Naive thymus-derived CD4-positive, alpha-beta T cell (primary cell): ENCODE measurements at regions of chr17 and their contacts with region 1.

Region 1: DNA sequence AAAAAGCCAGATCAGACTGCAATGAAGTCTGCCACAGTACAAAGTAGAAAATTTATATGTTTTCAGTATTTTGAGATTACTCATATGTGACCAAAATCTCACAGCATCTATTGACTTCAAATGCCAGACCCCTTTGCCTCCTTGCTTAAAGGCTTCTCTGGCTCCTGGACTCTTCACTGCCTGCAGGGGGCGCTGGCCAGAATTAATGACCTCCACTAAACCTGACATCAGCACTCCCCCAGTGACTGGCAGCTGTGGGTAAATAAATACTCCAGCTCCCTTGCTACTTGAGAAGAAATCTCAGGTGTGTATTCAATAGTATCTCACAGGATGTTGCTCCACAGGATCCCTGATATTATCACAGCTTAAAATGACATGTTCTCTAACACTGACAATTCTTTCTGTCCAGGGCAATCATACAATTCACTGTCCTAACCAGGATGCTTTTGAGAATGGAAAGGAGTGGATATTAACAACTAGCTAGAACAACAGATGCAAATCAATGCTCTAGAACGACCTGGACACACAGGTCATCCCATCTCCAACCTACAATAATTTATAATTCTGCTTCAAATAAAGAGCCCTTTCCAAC is 4.0 kb downstream of the BECN1 start:
- DNase-seq: peak; percentile 16 to 57 (median 34)
- ATAC-seq: no peak
- H3K4me3 ChIP-seq: no peak overlapping the region
- H3K4me3 Mint-ChIP-seq: peak overlapping the region in 2 of 10 donors; percentile 1 to 22
- H3K27ac ChIP-seq: peak overlapping the region; percentile 40
- H3K27ac Mint-ChIP-seq: peak overlapping the region in 4 of 9 donors; percentile 6 to 43 (median 27)
- H3K4me1 ChIP-seq: peaks cover 6 to 12% of the 10 kb centered on the region in 2 donors
- H3K4me1 Mint-ChIP-seq: peaks cover 19 to 42% (median 28%) of the 10 kb centered on the region in 7 donors
- H3K27me3 ChIP-seq: no peaks in the 10 kb centered on the region
- H3K27me3 Mint-ChIP-seq: no peaks in the 10 kb centered on the region

Region 2: DNA sequence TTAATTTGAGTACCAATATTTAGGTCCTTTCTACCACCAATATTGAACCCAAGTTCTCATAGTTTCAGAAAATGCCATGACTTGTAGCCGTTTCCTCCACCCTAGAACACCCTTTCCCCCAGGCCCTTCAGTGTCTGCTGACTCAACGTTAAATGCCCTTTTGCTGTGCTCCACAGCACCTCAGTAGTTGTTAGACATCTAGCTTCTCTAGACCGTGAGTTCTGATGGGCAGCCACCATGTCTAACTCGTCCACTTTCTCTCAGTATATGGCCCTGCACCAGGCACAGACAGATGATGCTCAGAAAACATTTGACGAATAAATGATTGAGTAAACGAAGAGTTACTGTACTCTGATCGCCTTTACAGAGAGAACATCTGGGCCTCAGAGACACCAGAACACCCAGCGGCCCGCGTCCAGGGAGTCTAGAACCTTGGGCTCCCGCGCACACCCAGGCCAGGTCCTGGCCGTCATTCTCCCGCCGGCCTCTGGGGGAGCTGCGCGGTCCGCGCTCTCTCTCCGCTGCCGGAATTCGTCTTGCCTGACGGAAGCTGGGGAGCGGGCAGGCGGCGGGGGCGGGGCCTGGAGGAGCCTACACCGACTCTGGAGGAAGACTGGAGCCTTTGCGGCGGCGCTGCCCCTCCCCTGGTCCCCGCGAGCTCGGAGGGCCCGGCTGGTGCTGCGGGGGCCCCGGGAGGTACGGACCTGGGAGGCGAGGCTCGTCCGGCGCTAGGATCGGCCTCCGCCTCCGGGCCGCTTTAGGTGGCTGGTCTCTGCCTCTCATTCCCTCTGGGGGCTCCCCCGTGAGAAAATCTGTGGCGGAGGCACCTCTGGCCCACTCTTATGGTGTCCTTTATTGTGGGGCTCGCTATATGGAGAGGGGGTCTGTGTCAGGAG is 800.3 kb before region 1 on chr17 and contains the start of gene NKIRAS2:
- CTCF ChIA-PET with region 1: no interaction called
- POLR2A ChIA-PET with region 1: no interaction called
- intact Hi-C with region 1: loop called in 1 of 2 experiments (anchors 5 kb)
- DNase-seq: peak; percentile 83 to 97 (median 89)
- ATAC-seq: peak; percentile 88
- H3K4me3 ChIP-seq: peak within 1 kb of the TSS; percentile 85
- H3K4me3 Mint-ChIP-seq: peak within 1 kb of the TSS; percentile 91 to 100 (median 99)
- H3K27ac ChIP-seq: peak within 1 kb of the TSS; percentile 84
- H3K27ac Mint-ChIP-seq: peak within 1 kb of the TSS; percentile 77 to 99 (median 90)
- H3K4me1 ChIP-seq: peaks cover 32 to 37% of the 10 kb centered on the region in 2 donors
- H3K4me1 Mint-ChIP-seq: peaks cover 44 to 69% (median 56%) of the 10 kb centered on the region in 7 donors
- H3K27me3 ChIP-seq: no peaks in the 10 kb centered on the region
- H3K27me3 Mint-ChIP-seq: no peaks in the 10 kb centered on the region
- total RNA-seq, gene NKIRAS2: 14.3 to 24.0 (median 20.4) TPM

Region 3: DNA sequence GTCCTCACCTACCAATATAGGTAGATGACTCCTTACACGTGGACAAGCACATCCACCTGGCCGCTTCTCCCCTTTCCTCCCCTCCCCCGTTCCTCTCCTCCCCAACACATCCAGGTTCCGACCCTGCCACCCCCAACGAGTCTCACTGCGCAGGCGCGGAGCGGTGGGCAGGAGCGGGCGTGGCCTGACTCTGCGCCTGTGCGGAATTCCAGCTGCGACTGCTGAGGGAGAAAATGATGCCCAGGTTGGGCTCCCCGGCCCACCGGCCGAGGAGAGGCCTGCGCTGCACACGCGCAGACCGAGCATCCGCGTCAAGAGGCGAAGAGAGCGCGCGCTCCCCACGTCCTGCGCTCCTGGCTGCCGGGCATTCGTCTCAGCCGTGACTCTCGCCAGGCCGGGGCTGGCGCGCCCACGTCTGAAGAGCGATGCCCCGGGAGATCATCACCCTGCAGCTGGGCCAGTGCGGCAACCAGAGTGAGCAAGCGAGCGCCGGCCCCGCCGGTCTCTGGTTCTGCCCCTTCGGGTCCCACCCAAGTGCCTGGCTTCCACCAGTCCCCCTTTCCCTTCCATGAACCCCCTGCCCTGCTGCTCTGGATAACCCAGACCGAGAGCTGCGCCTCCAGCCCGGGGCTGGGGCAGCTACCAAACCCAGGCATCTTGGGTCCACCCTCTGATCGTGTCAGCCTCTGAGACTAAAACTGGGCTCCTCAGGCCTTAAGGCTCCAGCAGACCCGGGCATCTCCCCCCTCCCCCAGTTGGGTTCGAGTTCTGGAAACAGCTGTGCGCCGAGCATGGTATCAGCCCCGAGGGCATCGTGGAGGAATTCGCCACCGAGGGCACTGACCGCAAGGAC is 160.7 kb before region 1 on chr17 and contains the start of gene TUBG2:
- CTCF ChIA-PET with region 1: no interaction called
- POLR2A ChIA-PET with region 1: no interaction called
- intact Hi-C with region 1: no loop called
- DNase-seq: peak; percentile 46 to 84 (median 56)
- ATAC-seq: peak; percentile 82
- H3K4me3 ChIP-seq: peak within 1 kb of the TSS; percentile 92
- H3K4me3 Mint-ChIP-seq: peak within 1 kb of the TSS; percentile 88 to 95 (median 90)
- H3K27ac ChIP-seq: peak within 1 kb of the TSS; percentile 62
- H3K27ac Mint-ChIP-seq: peak within 1 kb of the TSS; percentile 57 to 91 (median 79)
- H3K4me1 ChIP-seq: peaks cover 0 to 3% of the 10 kb centered on the region in 2 donors
- H3K4me1 Mint-ChIP-seq: peaks cover 13 to 23% (median 19%) of the 10 kb centered on the region in 7 donors
- H3K27me3 ChIP-seq: no peaks in the 10 kb centered on the region
- H3K27me3 Mint-ChIP-seq: peaks cover 0 to 12% (median 6%) of the 10 kb centered on the region in 5 donors
- total RNA-seq, gene TUBG2: 9.0 to 20.3 (median 15.3) TPM

Region 4: GRCh38 chr17:42677008-42677857 is 142.8 kb before region 1 on chr17:
- CTCF ChIA-PET with region 1: no interaction called
- POLR2A ChIA-PET with region 1: interaction called, 3 read pairs
- intact Hi-C with region 1: loop called in 1 of 2 experiments (anchors 2 kb)
- DNase-seq: peak; percentile 80 to 98 (median 92)
- ATAC-seq: peak; percentile 90
- H3K4me3 ChIP-seq: peak overlapping the region; percentile 73
- H3K4me3 Mint-ChIP-seq: peak overlapping the region; percentile 79 to 94 (median 90)
- H3K27ac ChIP-seq: peak overlapping the region; percentile 64
- H3K27ac Mint-ChIP-seq: peak overlapping the region in 8 of 9 donors; percentile 7 to 91 (median 82)
- H3K4me1 ChIP-seq: peaks cover 47 to 57% of the 10 kb centered on the region in 2 donors
- H3K4me1 Mint-ChIP-seq: peaks cover 21 to 60% (median 50%) of the 10 kb centered on the region in 7 donors
- H3K27me3 ChIP-seq: peaks cover 5 to 21% of the 10 kb centered on the region in 2 donors
- H3K27me3 Mint-ChIP-seq: peaks cover 26 to 49% (median 36%) of the 10 kb centered on the region in 5 donors

Region 5: GRCh38 chr17:42773290-42774035 is 46.6 kb before region 1 on chr17 and contains the start of gene VPS25:
- CTCF ChIA-PET with region 1: no interaction called
- POLR2A ChIA-PET with region 1: interaction called, 15 read pairs
- intact Hi-C with region 1: loop called in 1 of 2 experiments (anchors 1 kb)
- DNase-seq: peak; percentile 57 to 79 (median 73)
- ATAC-seq: peak; percentile 96
- H3K4me3 ChIP-seq: peak within 1 kb of the TSS; percentile 97
- H3K4me3 Mint-ChIP-seq: peak within 1 kb of the TSS; percentile 94 to 100 (median 98)
- H3K27ac ChIP-seq: peak within 1 kb of the TSS; percentile 93
- H3K27ac Mint-ChIP-seq: peak within 1 kb of the TSS; percentile 96 to 99 (median 98)
- H3K4me1 ChIP-seq: peaks cover 8% of the 10 kb centered on the region in 2 donors
- H3K4me1 Mint-ChIP-seq: peaks cover 12 to 35% (median 29%) of the 10 kb centered on the region in 7 donors
- H3K27me3 ChIP-seq: no peaks in the 10 kb centered on the region
- H3K27me3 Mint-ChIP-seq: peaks cover 0 to 5% (median 0%) of the 10 kb centered on the region in 5 donors
- total RNA-seq, gene VPS25: 24.3 to 60.6 (median 37.7) TPM

Region 6: GRCh38 chr17:42866631-42867575 is 46.9 kb after region 1 on chr17:
- CTCF ChIA-PET with region 1: no interaction called
- POLR2A ChIA-PET with region 1: no interaction called
- intact Hi-C with region 1: no loop called
- DNase-seq: no peak
- ATAC-seq: no peak
- H3K4me3 ChIP-seq: no peak overlapping the region
- H3K4me3 Mint-ChIP-seq: no peak overlapping the region
- H3K27ac ChIP-seq: no peak overlapping the region
- H3K27ac Mint-ChIP-seq: no peak overlapping the region
- H3K4me1 ChIP-seq: no peaks in the 10 kb centered on the region
- H3K4me1 Mint-ChIP-seq: peaks cover 0 to 2% (median 0%) of the 10 kb centered on the region in 7 donors
- H3K27me3 ChIP-seq: no peaks in the 10 kb centered on the region
- H3K27me3 Mint-ChIP-seq: peaks cover 9 to 20% (median 18%) of the 10 kb centered on the region in 5 donors

Region 7: DNA sequence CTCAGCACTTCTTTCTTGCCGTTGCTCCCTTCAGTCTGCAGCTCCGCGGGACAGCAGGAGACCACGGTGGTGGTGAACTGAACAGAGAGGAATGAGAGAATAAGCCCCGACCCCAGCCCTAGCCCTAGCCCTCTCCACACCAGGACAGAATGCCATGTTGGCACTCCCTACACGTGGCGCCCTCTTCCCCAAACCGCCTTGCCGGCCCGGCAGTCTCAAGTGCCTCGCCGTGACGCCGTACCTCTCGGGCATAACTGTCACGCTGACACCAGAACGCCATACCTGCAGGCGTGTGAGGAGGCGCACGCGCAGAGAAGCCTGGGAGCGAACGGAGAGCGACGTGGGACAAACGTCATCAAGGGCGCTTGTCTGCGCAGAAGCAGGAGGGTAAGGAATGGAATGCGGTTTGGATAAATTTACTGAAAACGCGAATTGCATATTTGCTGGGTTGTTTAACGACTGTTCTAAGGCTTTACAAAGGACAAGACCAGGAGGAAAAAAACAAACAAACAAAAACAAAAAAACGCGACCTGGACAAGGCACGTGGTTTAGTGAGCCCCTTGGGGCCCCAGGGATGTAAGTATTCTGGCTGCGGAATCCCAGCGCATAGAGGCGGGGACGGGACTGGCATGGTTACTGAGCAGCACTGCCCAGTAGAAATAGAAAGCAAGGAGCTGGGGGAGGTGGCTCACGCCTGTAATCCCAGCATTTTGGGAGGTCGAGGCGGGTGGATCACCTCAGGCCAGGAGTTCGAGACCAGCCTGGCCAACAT is 144.3 kb after region 1 on chr17 and contains the start of gene AARSD1:
- CTCF ChIA-PET with region 1: no interaction called
- POLR2A ChIA-PET with region 1: no interaction called
- intact Hi-C with region 1: loop called in 1 of 2 experiments (anchors 1 kb)
- DNase-seq: peak; percentile 77 to 92 (median 90)
- ATAC-seq: peak; percentile 99
- H3K4me3 ChIP-seq: peak within 1 kb of the TSS; percentile 96
- H3K4me3 Mint-ChIP-seq: peak within 1 kb of the TSS; percentile 89 to 99 (median 94)
- H3K27ac ChIP-seq: peak within 1 kb of the TSS; percentile 77
- H3K27ac Mint-ChIP-seq: peak within 1 kb of the TSS; percentile 86 to 97 (median 94)
- H3K4me1 ChIP-seq: peaks cover 5 to 10% of the 10 kb centered on the region in 2 donors
- H3K4me1 Mint-ChIP-seq: peaks cover 11 to 23% (median 18%) of the 10 kb centered on the region in 7 donors
- H3K27me3 ChIP-seq: no peaks in the 10 kb centered on the region
- H3K27me3 Mint-ChIP-seq: peaks cover 0 to 2% (median 0%) of the 10 kb centered on the region in 5 donors
- total RNA-seq, gene AARSD1: 46.5 to 86.7 (median 56.6) TPM

Region 8: GRCh38 chr17:43360739-43361505 is 540.9 kb after region 1 on chr17:
- CTCF ChIA-PET with region 1: no interaction called
- POLR2A ChIA-PET with region 1: interaction called, 3 read pairs
- intact Hi-C with region 1: loop called in 1 of 2 experiments (anchors 10 kb)
- DNase-seq: peak; percentile 69 to 97 (median 91)
- ATAC-seq: peak; percentile 88
- H3K4me3 ChIP-seq: peak overlapping the region; percentile 71
- H3K4me3 Mint-ChIP-seq: peak overlapping the region; percentile 87 to 99 (median 96)
- H3K27ac ChIP-seq: peak overlapping the region; percentile 95
- H3K27ac Mint-ChIP-seq: peak overlapping the region; percentile 98 to 100 (median 100)
- H3K4me1 ChIP-seq: peaks cover 13 to 14% of the 10 kb centered on the region in 2 donors
- H3K4me1 Mint-ChIP-seq: peaks cover 9 to 56% (median 38%) of the 10 kb centered on the region in 7 donors
- H3K27me3 ChIP-seq: no peaks in the 10 kb centered on the region
- H3K27me3 Mint-ChIP-seq: peaks cover 0 to 9% (median 0%) of the 10 kb centered on the region in 5 donors